Activated CD4-positive, alpha-beta T cell treated with anti-CD3 and anti-CD28 coated beads for 36 hours (primary cell): ENCODE measurements at regions of chr16 and their contacts with region 1.

Region 1: DNA sequence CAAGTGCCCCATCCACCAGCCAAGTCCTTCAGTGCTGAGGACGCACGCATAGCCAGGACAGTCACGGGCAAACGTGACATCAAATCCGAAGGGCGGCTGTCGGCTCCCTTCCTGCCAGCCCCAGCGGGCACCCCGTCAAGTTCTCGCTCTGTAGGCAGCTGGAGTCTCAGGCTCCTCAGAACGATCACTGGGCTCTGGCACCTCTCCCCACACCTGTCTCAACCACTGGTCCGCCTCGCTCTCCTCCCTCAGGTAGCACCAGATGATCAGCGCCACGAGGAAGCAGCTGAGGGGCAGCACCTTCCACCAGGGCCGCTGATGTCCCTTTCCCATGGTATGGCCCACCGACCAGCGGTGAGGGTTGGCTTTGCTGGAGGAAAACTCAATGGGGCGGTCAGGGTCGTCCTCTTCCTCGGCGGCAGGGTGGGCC is 421 bp downstream of the UQCC4 start:
- DNase-seq: peak; percentile 32
- ATAC-seq: no peak
- H3K4me3 Mint-ChIP-seq: peak overlapping the region; percentile 84
- H3K27ac Mint-ChIP-seq: peak overlapping the region; percentile 70
- H3K4me1 Mint-ChIP-seq: peaks cover 25% of the 10 kb centered on the region
- H3K27me3 Mint-ChIP-seq: no peaks in the 10 kb centered on the region

Region 2: DNA sequence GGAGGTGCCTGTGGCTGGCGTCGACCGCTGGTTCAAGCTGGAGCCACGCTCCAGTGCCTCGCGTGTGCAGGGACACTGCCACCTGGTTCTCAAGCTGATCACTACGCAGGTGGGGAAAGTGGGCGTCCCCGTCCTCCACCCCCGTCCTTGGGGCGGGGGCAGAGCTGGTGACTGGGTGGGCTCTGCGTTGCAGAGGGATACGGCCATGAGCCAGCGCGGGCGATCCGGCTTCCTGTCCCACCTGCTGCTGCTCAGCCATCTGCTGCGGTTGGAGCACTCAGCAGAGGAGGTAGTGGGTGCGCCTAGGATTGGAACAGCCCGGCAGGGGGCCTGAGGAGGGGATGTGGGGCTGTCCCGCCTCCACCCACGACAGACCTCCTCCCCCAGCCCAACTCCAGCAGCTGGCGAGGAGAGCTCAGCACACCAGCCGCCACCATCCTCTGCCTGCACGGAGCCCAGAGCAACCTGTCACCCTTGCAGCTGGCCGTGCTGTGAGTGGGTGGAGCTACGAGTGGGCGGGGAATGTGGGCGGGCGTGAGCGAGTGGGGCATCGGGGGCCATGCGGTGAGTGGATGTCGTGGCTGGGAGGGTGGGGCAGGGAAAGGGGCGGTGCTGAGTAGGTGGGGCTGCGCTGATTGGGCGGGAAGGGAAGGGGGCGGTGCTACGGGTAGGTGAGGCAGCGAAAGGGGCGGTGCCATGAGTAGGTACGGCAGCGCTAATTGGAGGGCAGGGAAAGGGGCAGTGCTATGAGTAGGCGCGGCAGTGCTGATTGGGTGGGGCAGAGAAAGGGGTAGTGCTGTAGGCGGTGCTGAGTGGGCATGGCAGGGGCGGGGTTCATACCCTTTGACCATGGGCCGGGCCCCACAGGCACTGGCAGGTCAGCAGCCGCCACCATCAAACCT is 77.3 kb before region 1 on chr16:
- CTCF ChIA-PET with region 1: no interaction called
- POLR2A ChIA-PET with region 1: no interaction called
- intact Hi-C with region 1: loop called (anchors 2 kb)
- DNase-seq: peak; percentile 96
- ATAC-seq: peak; percentile 98
- H3K4me3 Mint-ChIP-seq: peak overlapping the region; percentile 47
- H3K27ac Mint-ChIP-seq: no peak overlapping the region
- H3K4me1 Mint-ChIP-seq: peaks cover 17% of the 10 kb centered on the region
- H3K27me3 Mint-ChIP-seq: no peaks in the 10 kb centered on the region

Region 3: DNA sequence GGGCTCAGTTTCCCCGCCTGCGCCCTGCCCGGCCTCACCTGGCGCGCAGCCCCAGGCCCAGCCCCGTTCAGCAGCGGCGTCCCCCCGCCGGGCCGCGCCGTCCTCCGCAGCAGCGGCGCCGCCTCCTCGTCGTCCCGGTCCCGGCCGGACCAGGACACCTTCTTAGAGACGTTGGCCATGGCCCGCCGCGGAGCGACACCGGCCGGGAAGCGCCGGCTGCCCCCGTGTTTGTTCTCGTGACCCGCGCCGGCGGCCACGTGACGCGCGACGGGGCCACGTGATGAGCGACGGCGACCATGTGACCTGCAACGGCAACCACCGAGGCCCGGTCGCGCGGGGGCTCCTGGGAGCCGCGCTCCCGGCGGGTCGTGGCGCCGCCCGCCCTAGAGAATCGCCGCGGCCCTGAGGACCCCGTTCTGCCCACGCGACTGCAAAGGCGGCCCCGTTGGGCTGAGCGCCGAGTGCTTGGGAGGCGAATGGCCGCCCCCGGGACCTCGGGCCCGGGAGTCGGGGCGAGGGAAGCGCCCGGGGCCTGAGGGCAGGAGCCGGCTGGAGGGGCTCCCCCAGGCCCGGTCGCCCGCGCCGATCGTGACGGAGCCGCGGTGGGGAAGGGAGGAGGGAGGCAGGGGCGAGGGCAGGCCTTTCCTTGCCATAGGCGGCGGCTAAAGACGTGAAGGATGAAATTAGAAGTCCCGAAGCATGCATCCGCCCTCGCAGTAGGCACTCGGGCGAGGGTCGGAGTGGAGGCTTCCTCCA is 54.8 kb after region 1 on chr16 and contains the start of gene CLCN7:
- CTCF ChIA-PET with region 1: no interaction called
- POLR2A ChIA-PET with region 1: interaction called, 3 read pairs
- intact Hi-C with region 1: loop called (anchors 1 to 2 kb)
- DNase-seq: peak; percentile 95
- ATAC-seq: peak; percentile 91
- H3K4me3 Mint-ChIP-seq: peak within 1 kb of the TSS; percentile 73
- H3K27ac Mint-ChIP-seq: peak within 1 kb of the TSS; percentile 81
- H3K4me1 Mint-ChIP-seq: peaks cover 22% of the 10 kb centered on the region
- H3K27me3 Mint-ChIP-seq: no peaks in the 10 kb centered on the region
- total RNA-seq, gene CLCN7: 29.9 to 33.7 TPM

Region 4: GRCh38 chr16:1543085-1543896 is 123.2 kb after region 1 on chr16:
- CTCF ChIA-PET with region 1: no interaction called
- POLR2A ChIA-PET with region 1: no interaction called
- intact Hi-C with region 1: loop called in 1 of 2 experiments (anchors 2 kb)
- DNase-seq: peak; percentile 84
- ATAC-seq: peak; percentile 85
- H3K4me3 Mint-ChIP-seq: peak overlapping the region; percentile 71
- H3K27ac Mint-ChIP-seq: peak overlapping the region; percentile 99
- H3K4me1 Mint-ChIP-seq: peaks cover 78% of the 10 kb centered on the region
- H3K27me3 Mint-ChIP-seq: no peaks in the 10 kb centered on the region

Region 5: GRCh38 chr16:1602285-1602684 is 182.2 kb after region 1 on chr16:
- CTCF ChIA-PET with region 1: no interaction called
- POLR2A ChIA-PET with region 1: no interaction called
- intact Hi-C with region 1: no loop called
- DNase-seq: no peak
- ATAC-seq: no peak
- H3K4me3 Mint-ChIP-seq: no peak overlapping the region
- H3K27ac Mint-ChIP-seq: no peak overlapping the region
- H3K4me1 Mint-ChIP-seq: no peaks in the 10 kb centered on the region
- H3K27me3 Mint-ChIP-seq: no peaks in the 10 kb centered on the region

Region 6: DNA sequence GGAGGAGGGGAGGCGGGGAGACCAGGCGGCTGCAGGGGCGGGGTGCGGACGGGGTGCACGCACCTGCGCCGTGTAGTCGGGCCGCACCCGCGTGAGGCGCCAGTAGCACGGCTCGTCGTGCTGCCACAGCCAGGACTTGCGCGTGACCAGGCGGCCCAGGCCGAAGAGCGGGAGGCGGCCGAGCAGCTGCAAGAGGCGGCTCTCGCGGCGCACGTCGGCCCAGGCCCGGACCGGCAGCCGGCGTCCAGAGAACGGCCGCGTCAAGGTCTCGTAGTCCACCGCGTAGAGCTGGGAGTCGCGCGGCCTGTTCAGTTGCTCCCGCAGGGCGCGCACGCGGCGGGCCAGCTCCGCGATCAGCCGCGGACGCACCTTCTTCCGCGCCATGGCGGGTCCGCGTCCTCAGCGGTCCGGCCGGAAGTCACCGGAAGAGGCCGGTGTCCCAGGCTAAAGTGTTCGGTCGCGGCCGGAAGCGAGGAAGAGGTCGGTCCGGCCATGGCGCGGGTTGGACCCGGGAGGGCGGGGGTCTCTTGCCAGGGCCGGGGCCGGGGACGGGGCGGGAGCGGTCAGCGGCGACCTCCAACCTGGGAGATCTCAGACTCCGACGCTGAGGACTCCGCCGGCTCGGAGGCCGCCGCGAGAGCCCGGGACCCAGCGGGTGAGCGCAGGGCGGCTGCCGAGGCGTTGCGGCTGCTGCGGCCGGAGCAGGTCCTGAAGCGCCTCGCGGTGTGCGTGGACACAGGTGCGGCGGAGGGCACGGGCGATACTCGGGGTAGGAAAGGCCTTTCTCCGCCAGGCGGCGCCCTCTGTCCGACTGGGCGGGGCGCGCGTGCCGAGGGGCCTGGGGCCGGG is 352.8 kb after region 1 on chr16 and contains the starts of genes EME2 and MRPS34:
- CTCF ChIA-PET with region 1: no interaction called
- POLR2A ChIA-PET with region 1: no interaction called
- intact Hi-C with region 1: loop called in 1 of 2 experiments (anchors 1 kb)
- DNase-seq: peak; percentile 90
- ATAC-seq: peak; percentile 53
- H3K4me3 Mint-ChIP-seq: peak within 1 kb of the TSS; percentile 94
- H3K27ac Mint-ChIP-seq: peak within 1 kb of the TSS; percentile 99
- H3K4me1 Mint-ChIP-seq: peaks cover 9% of the 10 kb centered on the region
- H3K27me3 Mint-ChIP-seq: no peaks in the 10 kb centered on the region
- total RNA-seq, gene EME2: 13.1 to 18.4 TPM
- total RNA-seq, gene MRPS34: 146 to 175 TPM

Region 7: GRCh38 chr16:2047330-2048115 is 627.4 kb after region 1 on chr16 and contains the starts of genes NTHL1 and TSC2:
- CTCF ChIA-PET with region 1: no interaction called
- POLR2A ChIA-PET with region 1: no interaction called
- intact Hi-C with region 1: loop called in 1 of 2 experiments (anchors 2 kb)
- DNase-seq: peak; percentile 97
- ATAC-seq: peak; percentile 97
- H3K4me3 Mint-ChIP-seq: peak within 1 kb of the TSS; percentile 89
- H3K27ac Mint-ChIP-seq: peak within 1 kb of the TSS; percentile 85
- H3K4me1 Mint-ChIP-seq: peaks cover 18% of the 10 kb centered on the region
- H3K27me3 Mint-ChIP-seq: no peaks in the 10 kb centered on the region
- total RNA-seq, gene NTHL1: 22.6 to 26.1 TPM
- total RNA-seq, gene TSC2: 49.6 to 72.9 TPM